Esophagus squamous epithelium (tissue), 5 donors: ENCODE measurements at regions of chr9 and their contacts with region 1.

Region 1: GRCh38 chr9:124415102-124415851 is at the start of gene PSMB7:
- DNase-seq: peak; percentile 84
- H3K4me3 ChIP-seq: peak within 1 kb of the TSS; percentile 76 to 88 (median 82)
- H3K27ac ChIP-seq: peak within 1 kb of the TSS; percentile 68 to 84 (median 81)
- H3K4me1 ChIP-seq: peaks cover 0 to 38% (median 9%) of the 10 kb centered on the region in 3 donors
- H3K27me3 ChIP-seq: no peaks in the 10 kb centered on the region
- CTCF ChIP-seq: peak; percentile 64 to 91 (median 82)
- POLR2A ChIP-seq: peak in 1 of 4 donors; percentile 53
- total RNA-seq, gene PSMB7: 114 to 229 (median 170) TPM

Region 2: DNA sequence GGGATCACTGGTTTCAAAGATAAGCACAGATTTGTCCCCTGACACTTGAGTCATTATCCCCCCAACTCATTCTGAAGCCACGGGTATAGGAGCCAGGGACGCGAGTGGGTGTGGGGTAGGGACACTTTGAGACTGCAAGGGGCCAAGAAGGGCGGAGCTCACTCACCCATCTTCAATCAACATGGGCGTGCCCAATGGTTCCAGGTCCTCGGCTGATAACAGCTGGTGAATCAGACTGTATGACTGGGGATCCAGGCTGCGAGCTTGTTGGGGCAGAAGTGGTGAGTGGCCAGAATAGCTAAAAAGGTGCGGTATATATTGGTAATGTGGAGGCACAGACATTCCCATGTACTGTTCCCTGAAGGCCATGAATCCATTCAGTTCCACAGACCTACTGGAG is 122.6 kb after region 1 on chr9:
- intact Hi-C with region 1: loop called (anchors 5 kb)
- DNase-seq: no peak
- H3K4me3 ChIP-seq: no peak overlapping the region
- H3K27ac ChIP-seq: no peak overlapping the region
- H3K4me1 ChIP-seq: no peaks in the 10 kb centered on the region
- H3K27me3 ChIP-seq: no peaks in the 10 kb centered on the region
- CTCF ChIP-seq: no peak
- POLR2A ChIP-seq: no peak

Region 3: DNA sequence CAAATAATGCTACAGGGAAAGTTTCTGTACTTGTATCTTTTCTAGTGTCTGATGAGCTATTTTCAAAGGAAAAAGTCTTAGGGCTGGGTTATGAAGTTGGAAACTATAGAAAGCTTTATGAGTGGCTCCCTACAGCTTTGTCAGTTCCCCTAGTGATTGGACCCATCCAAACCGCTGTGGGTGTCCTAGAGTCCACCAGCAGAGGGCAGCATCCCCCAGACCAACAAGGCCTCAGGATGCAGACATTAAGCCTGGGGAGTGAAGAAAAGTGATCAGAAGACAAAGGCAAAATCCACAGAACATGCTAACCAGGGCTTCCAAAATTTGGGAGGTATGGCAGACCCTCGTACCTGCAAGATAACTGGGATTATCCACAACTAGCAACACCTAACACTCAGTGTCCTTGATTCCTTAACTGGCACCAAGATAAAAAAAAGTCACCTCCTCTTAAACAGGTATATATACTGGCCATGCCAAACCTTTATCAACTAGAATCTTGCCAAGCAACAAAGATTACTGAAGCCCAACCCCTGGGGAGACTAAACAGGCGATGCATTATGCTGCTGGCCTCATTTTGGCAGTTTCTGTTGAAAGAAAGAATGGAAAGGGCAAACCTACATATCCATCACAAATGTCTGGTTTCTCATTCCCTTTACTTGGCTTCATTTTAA is 202.3 kb after region 1 on chr9:
- intact Hi-C with region 1: no loop called
- DNase-seq: no peak
- H3K4me3 ChIP-seq: no peak overlapping the region
- H3K27ac ChIP-seq: no peak overlapping the region
- H3K4me1 ChIP-seq: peaks cover 0 to 5% (median 0%) of the 10 kb centered on the region in 3 donors
- H3K27me3 ChIP-seq: no peaks in the 10 kb centered on the region
- CTCF ChIP-seq: peak; percentile 40 to 90 (median 86)
- POLR2A ChIP-seq: no peak